ENCODE measurements at regions of chr5 and their contacts with region 1.

Region 1: GRCh38 chr5:179763215-179763945 is 30.4 kb upstream of the LTC4S start:
- DNase-seq: peak; percentile 74
- H3K4me3 ChIP-seq: no peak overlapping the region
- H3K27ac ChIP-seq: peak overlapping the region; percentile 52
- H3K4me1 ChIP-seq: peaks cover 47% of the 10 kb centered on the region
- H3K27me3 ChIP-seq: no peaks in the 10 kb centered on the region
- CTCF ChIP-seq: peak; percentile 91

Region 2: GRCh38 chr5:179836225-179837019 is 73.0 kb after region 1 on chr5:
- CTCF ChIA-PET with region 1: no interaction called
- POLR2A ChIA-PET with region 1: no interaction called
- intact Hi-C with region 1: loop called (anchors 5 kb)
- DNase-seq: peak in 1 of 2 experiments; percentile 49
- H3K4me3 ChIP-seq: no peak overlapping the region
- H3K27ac ChIP-seq: 0 out of 2 replicates have a peak overlapping the region, but pooled peaks have one; percentile 17
- H3K4me1 ChIP-seq: no peaks in the 10 kb centered on the region
- H3K27me3 ChIP-seq: no peaks in the 10 kb centered on the region
- CTCF ChIP-seq: no peak

Region 3: GRCh38 chr5:179858586-179859427 is 95.4 kb after region 1 on chr5 and contains the start of gene MRNIP:
- CTCF ChIA-PET with region 1: interaction called, 3 read pairs
- POLR2A ChIA-PET with region 1: no interaction called
- intact Hi-C with region 1: loop called (anchors 2 kb)
- DNase-seq: peak; percentile 85 to 98
- H3K4me3 ChIP-seq: peak within 1 kb of the TSS; percentile 83
- H3K27ac ChIP-seq: peak within 1 kb of the TSS; percentile 43; the same call in 1 of the 2 replicates
- H3K4me1 ChIP-seq: peaks cover 6% of the 10 kb centered on the region; the same call in 1 of the 2 replicates
- H3K27me3 ChIP-seq: no peaks in the 10 kb centered on the region
- CTCF ChIP-seq: no peak
- total RNA-seq, gene MRNIP: 39.9 and 54.0 TPM in 2 replicates

Region 4: DNA sequence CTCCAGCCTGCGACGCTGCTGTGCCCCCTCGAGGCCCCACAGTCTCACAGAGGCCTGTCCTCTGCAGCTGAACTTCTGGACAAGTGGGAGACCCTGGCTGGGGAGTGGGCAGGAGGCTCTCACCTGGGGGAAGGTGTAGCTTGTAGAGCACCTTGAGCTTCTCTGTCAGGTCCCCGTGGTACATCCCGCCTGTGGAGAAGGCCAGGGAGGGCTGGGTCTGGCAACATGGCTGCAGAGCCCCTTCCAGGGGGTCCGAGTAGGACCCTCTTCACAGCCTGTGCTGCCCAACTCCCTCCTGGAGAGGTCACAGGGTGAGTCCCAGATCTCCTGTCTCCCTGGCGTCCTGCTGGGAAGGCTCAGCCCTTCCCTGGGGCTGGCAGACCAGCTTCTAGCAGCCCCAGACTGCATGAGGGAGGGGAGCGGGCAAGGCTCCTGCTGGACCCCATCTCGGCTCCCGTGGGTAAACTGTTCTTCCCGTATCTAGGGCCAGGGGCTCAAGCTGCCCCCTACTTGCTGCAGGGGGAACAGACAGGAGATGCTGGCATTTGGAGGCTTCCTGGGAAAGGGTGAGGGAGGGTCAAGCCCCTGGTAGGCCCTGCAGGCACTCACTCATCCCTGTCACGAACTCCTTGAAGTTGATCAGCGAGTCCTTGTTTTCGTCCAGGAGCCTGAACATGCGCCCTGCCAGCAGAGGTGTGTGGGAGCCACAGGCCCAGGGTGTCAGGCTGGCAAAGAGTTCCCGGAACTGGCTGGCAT is 106.4 kb after region 1 on chr5:
- CTCF ChIA-PET with region 1: no interaction called
- POLR2A ChIA-PET with region 1: no interaction called
- intact Hi-C with region 1: no loop called
- DNase-seq: no peak
- H3K4me3 ChIP-seq: no peak overlapping the region
- H3K27ac ChIP-seq: no peak overlapping the region
- H3K4me1 ChIP-seq: no peaks in the 10 kb centered on the region
- H3K27me3 ChIP-seq: no peaks in the 10 kb centered on the region
- CTCF ChIP-seq: no peak

Region 5: DNA sequence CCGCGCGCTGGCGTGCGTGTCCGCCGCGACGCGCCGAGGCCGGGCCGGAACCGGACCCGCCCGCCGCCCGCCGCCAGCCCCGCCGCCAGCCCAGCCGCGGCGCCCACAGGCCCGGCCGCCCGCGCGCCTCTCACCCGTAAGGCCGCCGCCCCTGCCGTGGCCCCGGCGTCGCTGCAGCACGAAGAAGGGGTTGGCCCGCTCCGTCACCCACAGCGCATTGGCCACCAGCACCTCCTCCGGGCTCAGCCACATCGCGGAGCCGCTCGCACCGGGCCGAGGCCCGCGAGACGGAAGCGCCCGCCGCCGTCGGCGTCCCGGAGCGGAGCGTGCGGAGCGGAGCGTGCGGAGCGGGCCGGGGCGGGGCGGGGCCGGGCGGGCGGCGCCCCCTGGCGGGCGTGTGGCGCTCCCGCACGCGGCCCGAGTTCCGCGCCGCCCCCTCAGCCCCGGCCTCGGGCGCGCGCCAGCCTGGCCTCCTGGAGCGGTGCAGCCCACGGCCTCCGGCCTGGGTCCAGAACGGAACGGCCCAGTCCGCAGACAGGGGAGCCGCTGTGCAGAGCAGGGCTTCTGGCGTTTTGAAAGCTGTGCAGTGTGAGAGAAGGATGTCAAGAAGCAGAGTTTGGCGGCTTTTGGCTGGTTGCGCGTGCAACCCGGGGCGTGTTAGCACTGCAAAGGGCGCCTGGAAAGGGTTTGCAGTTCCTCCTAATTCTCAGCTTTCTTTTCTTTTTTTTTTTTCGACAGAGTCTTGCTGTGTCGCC is 144.4 kb after region 1 on chr5 and contains the start of gene TBC1D9B:
- CTCF ChIA-PET with region 1: no interaction called
- POLR2A ChIA-PET with region 1: no interaction called
- intact Hi-C with region 1: loop called (anchors 5 kb)
- DNase-seq: peak in 1 of 2 experiments; percentile 69
- H3K4me3 ChIP-seq: peak within 1 kb of the TSS; percentile 95
- H3K27ac ChIP-seq: 0 out of 2 replicates have a peak within 1 kb of the TSS, but pooled peaks have one; percentile 9
- H3K4me1 ChIP-seq: peaks cover 11% of the 10 kb centered on the region
- H3K27me3 ChIP-seq: no peaks in the 10 kb centered on the region
- CTCF ChIP-seq: 0 out of 2 replicates have a peak, but pooled peaks have one; percentile 17
- total RNA-seq, gene TBC1D9B: 118 and 148 TPM in 2 replicates

Region 6: GRCh38 chr5:180006141-180006540 is 242.8 kb after region 1 on chr5:
- CTCF ChIA-PET with region 1: no interaction called
- POLR2A ChIA-PET with region 1: no interaction called
- intact Hi-C with region 1: no loop called
- DNase-seq: no peak
- H3K4me3 ChIP-seq: no peak overlapping the region
- H3K27ac ChIP-seq: no peak overlapping the region
- H3K4me1 ChIP-seq: no peaks in the 10 kb centered on the region
- H3K27me3 ChIP-seq: no peaks in the 10 kb centered on the region
- CTCF ChIP-seq: no peak

Region 7: DNA sequence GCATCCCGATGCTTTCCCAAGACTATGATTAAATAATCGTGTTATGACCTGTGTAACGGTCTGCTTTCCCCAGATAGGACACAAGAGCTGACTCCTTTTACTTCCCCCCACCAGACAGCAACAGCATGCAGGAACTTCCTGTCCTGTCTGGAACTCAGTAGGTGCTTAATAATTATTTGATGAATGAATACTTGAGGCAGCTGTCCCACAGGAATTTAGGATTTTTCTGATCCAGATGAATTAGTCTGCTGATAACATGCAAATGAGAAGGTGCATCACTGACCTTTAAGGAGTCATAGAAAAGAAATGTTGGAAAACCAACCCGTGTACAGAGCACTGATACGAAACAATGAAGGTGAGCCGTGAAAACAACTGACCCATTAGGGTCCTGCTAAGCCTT is 295.9 kb after region 1 on chr5:
- CTCF ChIA-PET with region 1: no interaction called
- POLR2A ChIA-PET with region 1: no interaction called
- intact Hi-C with region 1: no loop called
- DNase-seq: no peak
- H3K4me3 ChIP-seq: no peak overlapping the region
- H3K27ac ChIP-seq: no peak overlapping the region
- H3K4me1 ChIP-seq: no peaks in the 10 kb centered on the region
- H3K27me3 ChIP-seq: no peaks in the 10 kb centered on the region
- CTCF ChIP-seq: no peak

Region 8: DNA sequence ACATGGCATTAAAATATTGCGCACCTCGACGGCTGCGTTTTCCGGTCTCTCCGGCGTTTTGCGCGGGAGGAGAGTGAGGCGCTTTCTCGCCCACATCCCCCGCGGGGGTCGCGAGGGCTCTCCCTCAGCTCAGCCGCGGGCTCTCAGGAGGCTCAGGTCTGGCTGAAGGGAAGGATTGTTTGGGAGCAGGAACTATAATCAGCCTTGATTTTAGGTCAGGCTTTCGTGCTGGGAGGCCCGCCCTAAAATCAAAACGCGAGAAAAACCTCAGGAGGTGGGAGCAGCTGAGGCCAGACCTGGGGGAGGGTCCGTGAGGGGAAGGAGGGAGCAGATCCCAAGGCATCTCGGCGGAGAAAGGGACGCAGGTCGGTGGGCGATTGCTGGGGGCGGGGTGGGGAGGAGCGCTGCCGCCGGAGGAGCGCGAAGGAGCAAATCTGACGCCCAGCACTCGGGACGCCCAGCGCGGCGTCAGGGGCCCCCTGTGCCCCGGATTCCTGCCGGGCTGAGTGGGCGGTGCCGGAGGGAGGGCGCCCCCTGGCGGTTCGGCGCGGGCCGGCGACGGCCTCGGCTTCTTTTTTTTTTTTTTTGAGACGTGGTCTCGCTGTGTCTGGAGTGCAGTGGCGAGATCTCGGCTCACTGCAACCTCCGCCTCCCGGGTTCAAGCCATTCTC is 326.9 kb after region 1 on chr5:
- CTCF ChIA-PET with region 1: no interaction called
- POLR2A ChIA-PET with region 1: no interaction called
- intact Hi-C with region 1: loop called (anchors 1 kb)
- DNase-seq: peak in 1 of 2 experiments; percentile 84
- H3K4me3 ChIP-seq: peak overlapping the region; percentile 41; the same call in 1 of the 2 replicates
- H3K27ac ChIP-seq: no peak overlapping the region
- H3K4me1 ChIP-seq: peaks cover 8% of the 10 kb centered on the region
- H3K27me3 ChIP-seq: no peaks in the 10 kb centered on the region
- CTCF ChIP-seq: peak; percentile 82